ENCODE measurements at regions of chr15 and their contacts with region 1.

Region 1: GRCh38 chr15:73130830-73131229 is 78.6 kb downstream of the NEO1 start:
- DNase-seq: no peak
- H3K4me3 ChIP-seq: no peak overlapping the region
- H3K27ac ChIP-seq: no peak overlapping the region
- H3K4me1 ChIP-seq: no peaks in the 10 kb centered on the region
- H3K27me3 ChIP-seq: peaks cover 7% of the 10 kb centered on the region; the same call in 1 of the 2 replicates
- CTCF ChIP-seq: no peak

Region 2: DNA sequence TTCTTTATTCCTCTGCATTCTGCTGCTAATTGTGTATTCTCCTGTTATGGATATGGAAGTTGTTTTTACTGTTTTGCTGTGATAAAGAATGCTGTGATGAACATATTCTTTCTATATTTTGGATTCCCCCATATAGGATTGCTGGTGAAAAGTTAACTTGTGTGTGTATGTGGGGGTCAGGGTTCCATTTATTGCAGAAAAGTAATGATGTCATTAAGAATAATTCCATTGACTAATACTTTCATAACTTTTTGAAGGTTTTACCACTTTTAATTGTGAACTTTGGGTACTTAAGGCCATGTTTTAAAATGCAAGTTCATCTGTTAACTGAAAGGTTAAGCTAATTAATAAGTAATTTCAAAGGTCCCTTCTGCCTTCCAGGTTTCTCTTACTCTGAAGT is 72.4 kb before region 1 on chr15:
- CTCF ChIA-PET with region 1: interaction called, 11 read pairs
- POLR2A ChIA-PET with region 1: no interaction called
- intact Hi-C with region 1: no loop called
- DNase-seq: no peak
- H3K4me3 ChIP-seq: no peak overlapping the region
- H3K27ac ChIP-seq: no peak overlapping the region
- H3K4me1 ChIP-seq: no peaks in the 10 kb centered on the region
- H3K27me3 ChIP-seq: 0 out of 2 replicates have a peak, but pooled peaks cover 4% of the 10 kb centered on the region
- CTCF ChIP-seq: no peak